Naive thymus-derived CD4-positive, alpha-beta T cell (primary cell): ENCODE measurements at regions of chr14 and their contacts with region 1.

Region 1: GRCh38 chr14:75002392-75003249 is at the start of gene EIF2B2:
- DNase-seq: peak; percentile 90 to 100 (median 99)
- ATAC-seq: peak; percentile 97
- H3K4me3 ChIP-seq: peak within 1 kb of the TSS; percentile 93
- H3K4me3 Mint-ChIP-seq: peak within 1 kb of the TSS; percentile 78 to 99 (median 94)
- H3K27ac ChIP-seq: peak within 1 kb of the TSS; percentile 91
- H3K27ac Mint-ChIP-seq: peak within 1 kb of the TSS; percentile 95 to 100 (median 97)
- H3K4me1 ChIP-seq: peaks cover 15 to 23% of the 10 kb centered on the region in 2 donors
- H3K4me1 Mint-ChIP-seq: peaks cover 23 to 50% (median 44%) of the 10 kb centered on the region in 7 donors
- H3K27me3 ChIP-seq: no peaks in the 10 kb centered on the region
- H3K27me3 Mint-ChIP-seq: peaks cover 0 to 5% (median 0%) of the 10 kb centered on the region in 5 donors
- total RNA-seq, gene EIF2B2: 23.8 to 40.7 (median 26.1) TPM

Region 2: GRCh38 chr14:74302634-74303577 is 699.7 kb before region 1 on chr14 and contains the start of gene ABCD4:
- CTCF ChIA-PET with region 1: no interaction called
- POLR2A ChIA-PET with region 1: no interaction called
- intact Hi-C with region 1: loop called in 1 of 2 experiments (anchors 2 kb)
- DNase-seq: peak; percentile 50 to 85 (median 65)
- ATAC-seq: peak; percentile 95
- H3K4me3 ChIP-seq: peak within 1 kb of the TSS; percentile 87
- H3K4me3 Mint-ChIP-seq: peak within 1 kb of the TSS; percentile 90 to 100 (median 96)
- H3K27ac ChIP-seq: peak within 1 kb of the TSS; percentile 77
- H3K27ac Mint-ChIP-seq: peak within 1 kb of the TSS; percentile 81 to 99 (median 96)
- H3K4me1 ChIP-seq: peaks cover 17 to 19% of the 10 kb centered on the region in 2 donors
- H3K4me1 Mint-ChIP-seq: peaks cover 18 to 49% (median 33%) of the 10 kb centered on the region in 7 donors
- H3K27me3 ChIP-seq: no peaks in the 10 kb centered on the region
- H3K27me3 Mint-ChIP-seq: no peaks in the 10 kb centered on the region
- total RNA-seq, gene ABCD4: 57.6 to 109 (median 68.2) TPM

Region 3: GRCh38 chr14:74762917-74763802 is 239.5 kb before region 1 on chr14 and contains the start of gene YLPM1:
- CTCF ChIA-PET with region 1: no interaction called
- POLR2A ChIA-PET with region 1: no interaction called
- intact Hi-C with region 1: loop called (anchors 1 kb)
- DNase-seq: peak; percentile 79 to 97 (median 95)
- ATAC-seq: peak; percentile 98
- H3K4me3 ChIP-seq: peak within 1 kb of the TSS; percentile 58
- H3K4me3 Mint-ChIP-seq: peak within 1 kb of the TSS; percentile 86 to 99 (median 95)
- H3K27ac ChIP-seq: peak within 1 kb of the TSS; percentile 93
- H3K27ac Mint-ChIP-seq: peak within 1 kb of the TSS; percentile 87 to 97 (median 95)
- H3K4me1 ChIP-seq: peaks cover 31 to 38% of the 10 kb centered on the region in 2 donors
- H3K4me1 Mint-ChIP-seq: peaks cover 43 to 56% (median 49%) of the 10 kb centered on the region in 7 donors
- H3K27me3 ChIP-seq: no peaks in the 10 kb centered on the region
- H3K27me3 Mint-ChIP-seq: peaks cover 0 to 2% (median 0%) of the 10 kb centered on the region in 5 donors
- total RNA-seq, gene YLPM1: 84.7 to 119 (median 109) TPM

Region 4: GRCh38 chr14:74922739-74923401 is 79.8 kb before region 1 on chr14 and contains the start of gene RPS6KL1:
- CTCF ChIA-PET with region 1: no interaction called
- POLR2A ChIA-PET with region 1: no interaction called
- intact Hi-C with region 1: loop called in 1 of 2 experiments (anchors 1 kb)
- DNase-seq: peak; percentile 58 to 76 (median 69)
- ATAC-seq: peak; percentile 98
- H3K4me3 ChIP-seq: peak within 1 kb of the TSS; percentile 47
- H3K4me3 Mint-ChIP-seq: peak within 1 kb of the TSS; percentile 54 to 86 (median 68)
- H3K27ac ChIP-seq: peak within 1 kb of the TSS; percentile 77
- H3K27ac Mint-ChIP-seq: peak within 1 kb of the TSS in 8 of 9 donors; percentile 6 to 78 (median 60)
- H3K4me1 ChIP-seq: peaks cover 0 to 3% of the 10 kb centered on the region in 2 donors
- H3K4me1 Mint-ChIP-seq: peaks cover 0 to 16% (median 13%) of the 10 kb centered on the region in 7 donors
- H3K27me3 ChIP-seq: no peaks in the 10 kb centered on the region
- H3K27me3 Mint-ChIP-seq: peaks cover 0 to 19% (median 8%) of the 10 kb centered on the region in 5 donors
- total RNA-seq, gene RPS6KL1: 3.0 to 12.8 (median 6.3) TPM

Region 5: GRCh38 chr14:75063407-75064213 is 61.0 kb after region 1 on chr14 and contains the start of gene ACYP1:
- CTCF ChIA-PET with region 1: no interaction called
- POLR2A ChIA-PET with region 1: interaction called, 4 read pairs
- intact Hi-C with region 1: loop called (anchors 1 to 2 kb)
- DNase-seq: peak; percentile 79 to 93 (median 86)
- ATAC-seq: peak; percentile 99
- H3K4me3 ChIP-seq: peak within 1 kb of the TSS; percentile 98
- H3K4me3 Mint-ChIP-seq: peak within 1 kb of the TSS; percentile 93 to 100 (median 99)
- H3K27ac ChIP-seq: peak within 1 kb of the TSS; percentile 83
- H3K27ac Mint-ChIP-seq: peak within 1 kb of the TSS; percentile 90 to 99 (median 96)
- H3K4me1 ChIP-seq: peaks cover 10 to 13% of the 10 kb centered on the region in 2 donors
- H3K4me1 Mint-ChIP-seq: peaks cover 15 to 38% (median 27%) of the 10 kb centered on the region in 7 donors
- H3K27me3 ChIP-seq: no peaks in the 10 kb centered on the region
- H3K27me3 Mint-ChIP-seq: no peaks in the 10 kb centered on the region
- total RNA-seq, gene ACYP1: 11.8 to 39.5 (median 31.2) TPM

Region 6: GRCh38 chr14:75258615-75259466 is 256.2 kb after region 1 on chr14:
- CTCF ChIA-PET with region 1: no interaction called
- POLR2A ChIA-PET with region 1: no interaction called
- intact Hi-C with region 1: loop called in 1 of 2 experiments (anchors 5 kb)
- DNase-seq: peak; percentile 97 to 100 (median 100)
- ATAC-seq: peak; percentile 94
- H3K4me3 ChIP-seq: peak overlapping the region; percentile 75
- H3K4me3 Mint-ChIP-seq: peak overlapping the region; percentile 75 to 95 (median 92)
- H3K27ac ChIP-seq: peak overlapping the region; percentile 94
- H3K27ac Mint-ChIP-seq: peak overlapping the region; percentile 98 to 100 (median 100)
- H3K4me1 ChIP-seq: peaks cover 16 to 19% of the 10 kb centered on the region in 2 donors
- H3K4me1 Mint-ChIP-seq: peaks cover 14 to 50% (median 32%) of the 10 kb centered on the region in 7 donors
- H3K27me3 ChIP-seq: peaks cover 0 to 3% of the 10 kb centered on the region in 2 donors
- H3K27me3 Mint-ChIP-seq: peaks cover 0 to 74% (median 0%) of the 10 kb centered on the region in 5 donors